ENCODE measurements at regions of chr7 and their contacts with region 1.

Region 1: GRCh38 chr7:39948956-39949928 is 814 bp upstream of the CDK13 start:
- DNase-seq: peak; percentile 96 to 99 (median 99)
- ATAC-seq: peak; percentile 71 to 79 (median 76)
- H3K4me3 ChIP-seq: peak overlapping the region; percentile 61 to 99
- H3K4me3 Mint-ChIP-seq: peak overlapping the region; percentile 95 to 99 (median 98)
- H3K27ac ChIP-seq: peak overlapping the region; percentile 99
- H3K27ac Mint-ChIP-seq: peak overlapping the region; percentile 99 to 100
- H3K4me1 ChIP-seq: peaks cover 12 to 25% of the 10 kb centered on the region in 2 experiments
- H3K4me1 Mint-ChIP-seq: peaks cover 35 to 39% (median 38%) of the 10 kb centered on the region in 3 donors
- H3K27me3 ChIP-seq: no peaks in the 10 kb centered on the region
- H3K27me3 Mint-ChIP-seq: peaks cover 0 to 2% of the 10 kb centered on the region in 2 donors

Region 2: GRCh38 chr7:39894904-39895303 is 54.3 kb before region 1 on chr7:
- CTCF ChIA-PET with region 1: interaction called, 3 to 14 read pairs
- POLR2A ChIA-PET with region 1: no interaction called
- DNase-seq: no peak
- ATAC-seq: no peak
- H3K4me3 ChIP-seq: no peak overlapping the region
- H3K4me3 Mint-ChIP-seq: no peak overlapping the region
- H3K27ac ChIP-seq: no peak overlapping the region
- H3K27ac Mint-ChIP-seq: no peak overlapping the region
- H3K4me1 ChIP-seq: peaks cover 0 to 3% of the 10 kb centered on the region in 2 experiments
- H3K4me1 Mint-ChIP-seq: peaks cover 0 to 3% (median 0%) of the 10 kb centered on the region in 3 donors
- H3K27me3 ChIP-seq: peaks cover 0 to 12% of the 10 kb centered on the region in 2 experiments
- H3K27me3 Mint-ChIP-seq: peaks cover 0 to 5% of the 10 kb centered on the region in 2 donors

Region 3: GRCh38 chr7:39910108-39910869 is 39.0 kb before region 1 on chr7:
- CTCF ChIA-PET with region 1: no interaction called
- POLR2A ChIA-PET with region 1: interaction called in 1 of 2 experiments, 18 read pairs
- DNase-seq: no peak
- ATAC-seq: no peak
- H3K4me3 ChIP-seq: no peak overlapping the region
- H3K4me3 Mint-ChIP-seq: no peak overlapping the region
- H3K27ac ChIP-seq: no peak overlapping the region
- H3K27ac Mint-ChIP-seq: no peak overlapping the region
- H3K4me1 ChIP-seq: peaks cover 0 to 3% of the 10 kb centered on the region in 2 experiments
- H3K4me1 Mint-ChIP-seq: peaks cover 6% of the 10 kb centered on the region in 3 donors
- H3K27me3 ChIP-seq: peaks cover 0 to 6% of the 10 kb centered on the region in 2 experiments
- H3K27me3 Mint-ChIP-seq: peaks cover 0 to 3% of the 10 kb centered on the region in 2 donors

Region 4: GRCh38 chr7:40047661-40048060 is 98.4 kb after region 1 on chr7:
- CTCF ChIA-PET with region 1: interaction called, 3 to 23 read pairs
- POLR2A ChIA-PET with region 1: interaction called in 1 of 2 experiments, 14 read pairs
- DNase-seq: no peak
- ATAC-seq: no peak
- H3K4me3 ChIP-seq: no peak overlapping the region
- H3K4me3 Mint-ChIP-seq: no peak overlapping the region
- H3K27ac ChIP-seq: no peak overlapping the region
- H3K27ac Mint-ChIP-seq: no peak overlapping the region
- H3K4me1 ChIP-seq: no peaks in the 10 kb centered on the region
- H3K4me1 Mint-ChIP-seq: peaks cover 5 to 7% (median 7%) of the 10 kb centered on the region in 3 donors
- H3K27me3 ChIP-seq: no peaks in the 10 kb centered on the region
- H3K27me3 Mint-ChIP-seq: no peaks in the 10 kb centered on the region

Measured in T-cell (primary cell).